Left colon (tissue), 2 donors: ENCODE measurements at regions of chr6 and their contacts with region 1.

Region 1: GRCh38 chr6:40894962-40895799 is 143.8 kb downstream of the UNC5CL start:
- DNase-seq: peak; percentile 43 to 59
- ATAC-seq: peak; percentile 98

Region 2: GRCh38 chr6:40845553-40845952 is 49.6 kb before region 1 on chr6:
- intact Hi-C with region 1: no loop called
- DNase-seq: peak; percentile 28 to 46
- ATAC-seq: peak; percentile 33

Region 3: DNA sequence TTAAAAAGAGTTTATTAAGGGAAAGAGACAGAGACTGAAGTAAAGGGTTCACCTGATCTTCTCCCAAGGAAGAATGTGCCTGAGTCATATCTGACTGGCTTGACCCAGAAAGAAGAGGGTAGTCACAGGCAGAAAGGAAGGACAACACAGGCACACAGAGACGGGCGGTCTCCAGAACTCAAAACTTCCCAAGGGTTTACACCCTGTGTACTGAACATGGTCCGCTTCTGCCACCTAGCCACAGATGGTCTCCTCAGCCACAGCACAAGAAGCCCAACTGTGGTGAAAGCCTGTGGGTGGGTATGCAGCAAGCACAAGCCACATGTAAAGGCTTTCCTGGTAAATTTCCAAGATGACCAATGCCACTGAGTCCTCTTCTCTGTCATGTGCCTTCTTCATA is 126.7 kb after region 1 on chr6:
- intact Hi-C with region 1: loop called in 1 of 2 experiments (anchors 5 kb)
- DNase-seq: no peak
- ATAC-seq: no peak

Region 4: GRCh38 chr6:41591859-41592502 is 696.8 kb after region 1 on chr6:
- intact Hi-C with region 1: no loop called
- DNase-seq: peak; percentile 51 to 76
- ATAC-seq: peak; percentile 74